ENCODE measurements at regions of chr4 and their contacts with region 1.

Region 1: GRCh38 chr4:7987148-7987989 is 47.7 kb upstream of the AFAP1 start:
- DNase-seq: peak; percentile 64
- H3K4me3 Mint-ChIP-seq: no peak overlapping the region
- H3K27ac Mint-ChIP-seq: no peak overlapping the region
- H3K4me1 Mint-ChIP-seq: peaks cover 6% of the 10 kb centered on the region
- H3K27me3 Mint-ChIP-seq: peaks cover 6% of the 10 kb centered on the region

Region 2: DNA sequence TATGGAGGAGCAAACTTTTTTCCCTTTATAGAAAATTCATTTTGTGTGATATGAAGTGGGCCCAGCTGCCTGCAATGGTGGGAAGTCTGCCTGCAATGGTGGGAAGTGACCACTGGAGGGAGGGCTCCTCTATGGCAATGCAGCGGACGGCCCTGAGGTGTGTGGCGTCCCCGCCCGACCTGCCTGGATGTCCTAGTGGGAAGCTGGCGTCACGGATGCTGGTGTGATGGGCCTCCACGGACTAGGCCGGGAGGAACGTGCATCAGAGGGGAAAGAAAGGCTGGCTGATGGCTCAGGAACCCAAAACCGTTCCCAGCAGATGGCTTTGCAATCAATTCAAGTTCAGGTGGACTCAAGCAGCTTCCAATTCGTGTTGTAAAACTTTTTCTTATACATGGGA is 225.6 kb before region 1 on chr4:
- intact Hi-C with region 1: loop called (anchors 1 kb)
- DNase-seq: peak; percentile 26
- H3K4me3 Mint-ChIP-seq: no peak overlapping the region
- H3K27ac Mint-ChIP-seq: no peak overlapping the region
- H3K4me1 Mint-ChIP-seq: peaks cover 43% of the 10 kb centered on the region
- H3K27me3 Mint-ChIP-seq: no peaks in the 10 kb centered on the region

Region 3: DNA sequence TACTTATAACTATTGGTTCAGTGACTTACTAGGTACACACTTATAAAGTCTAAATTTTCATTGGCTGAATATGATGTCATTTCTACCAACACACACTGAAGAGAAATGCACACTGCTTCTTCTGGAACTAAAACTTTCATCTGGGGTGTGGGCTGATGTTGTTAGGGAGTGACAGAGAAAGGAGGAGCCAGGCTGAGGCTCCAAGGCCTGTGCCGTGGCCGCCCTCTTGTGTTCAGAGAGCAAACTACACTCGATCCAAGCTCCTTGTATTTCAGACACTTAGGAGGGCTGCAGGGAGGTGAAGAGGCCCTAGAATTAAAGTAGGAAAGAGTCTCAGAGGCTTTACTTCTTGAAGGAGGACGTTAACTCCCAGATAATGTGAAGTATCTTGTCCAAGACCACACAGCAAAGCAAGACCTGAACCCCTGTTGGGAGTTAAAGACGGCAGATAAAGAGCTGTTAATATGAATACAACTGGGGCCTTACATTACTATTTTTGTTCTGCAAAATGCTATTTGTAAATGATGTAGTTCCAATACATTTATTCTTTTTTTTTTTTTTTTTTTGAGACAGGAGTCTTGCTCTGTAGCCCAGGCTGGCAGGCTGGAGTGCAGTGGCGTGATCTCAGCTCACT is 185.2 kb before region 1 on chr4:
- intact Hi-C with region 1: loop called (anchors 1 kb)
- DNase-seq: peak; percentile 63
- H3K4me3 Mint-ChIP-seq: no peak overlapping the region
- H3K27ac Mint-ChIP-seq: no peak overlapping the region
- H3K4me1 Mint-ChIP-seq: peaks cover 11% of the 10 kb centered on the region
- H3K27me3 Mint-ChIP-seq: no peaks in the 10 kb centered on the region

Region 4: DNA sequence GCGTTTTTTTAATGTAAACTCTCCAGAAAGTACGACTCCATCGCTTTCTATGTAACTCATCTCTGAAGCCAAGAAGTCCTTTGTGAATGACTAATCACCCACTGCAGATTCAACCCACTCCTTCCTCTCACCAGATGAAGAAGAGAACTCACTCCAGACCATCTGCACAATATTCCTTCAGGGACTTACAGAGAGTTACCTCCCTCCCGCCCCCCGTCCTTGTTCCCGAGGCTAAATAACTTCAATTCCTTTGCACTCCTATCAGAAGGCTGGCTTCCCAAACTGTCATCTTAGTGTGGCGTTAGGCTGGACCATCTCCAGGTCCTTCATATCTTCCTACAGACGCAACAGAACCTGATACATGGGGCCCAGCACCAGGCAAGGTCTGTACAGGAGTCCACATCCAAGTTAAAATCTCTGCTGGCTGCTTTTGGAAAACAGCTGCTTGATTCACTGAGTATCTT is 130.1 kb before region 1 on chr4:
- intact Hi-C with region 1: loop called (anchors 1 kb)
- DNase-seq: no peak
- H3K4me3 Mint-ChIP-seq: peak overlapping the region; percentile 54
- H3K27ac Mint-ChIP-seq: peak overlapping the region; percentile 93
- H3K4me1 Mint-ChIP-seq: peaks cover 60% of the 10 kb centered on the region
- H3K27me3 Mint-ChIP-seq: peaks cover 16% of the 10 kb centered on the region

Region 5: DNA sequence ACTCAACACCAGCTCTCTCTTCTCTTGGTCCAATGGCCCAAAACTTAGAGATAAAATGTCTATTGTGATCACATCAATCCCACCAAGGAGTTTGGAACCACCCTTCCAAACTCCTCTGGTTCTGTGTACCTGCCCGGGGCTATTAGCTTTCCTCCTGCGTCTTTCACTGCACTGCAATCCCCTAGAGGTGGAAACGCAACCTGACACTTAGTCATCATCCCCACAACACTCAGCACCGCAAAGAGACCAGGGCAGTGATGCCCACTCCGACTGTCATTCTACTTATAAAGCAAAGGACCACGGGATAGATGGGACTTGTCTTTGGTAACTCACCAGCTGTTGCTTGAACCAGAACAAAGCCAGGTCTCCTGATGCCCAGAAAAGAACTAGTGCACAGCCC is 69.7 kb before region 1 on chr4:
- intact Hi-C with region 1: no loop called
- DNase-seq: no peak
- H3K4me3 Mint-ChIP-seq: no peak overlapping the region
- H3K27ac Mint-ChIP-seq: peak overlapping the region; percentile 44
- H3K4me1 Mint-ChIP-seq: peaks cover 16% of the 10 kb centered on the region
- H3K27me3 Mint-ChIP-seq: peaks cover under 1% of the 10 kb centered on the region

Region 6: DNA sequence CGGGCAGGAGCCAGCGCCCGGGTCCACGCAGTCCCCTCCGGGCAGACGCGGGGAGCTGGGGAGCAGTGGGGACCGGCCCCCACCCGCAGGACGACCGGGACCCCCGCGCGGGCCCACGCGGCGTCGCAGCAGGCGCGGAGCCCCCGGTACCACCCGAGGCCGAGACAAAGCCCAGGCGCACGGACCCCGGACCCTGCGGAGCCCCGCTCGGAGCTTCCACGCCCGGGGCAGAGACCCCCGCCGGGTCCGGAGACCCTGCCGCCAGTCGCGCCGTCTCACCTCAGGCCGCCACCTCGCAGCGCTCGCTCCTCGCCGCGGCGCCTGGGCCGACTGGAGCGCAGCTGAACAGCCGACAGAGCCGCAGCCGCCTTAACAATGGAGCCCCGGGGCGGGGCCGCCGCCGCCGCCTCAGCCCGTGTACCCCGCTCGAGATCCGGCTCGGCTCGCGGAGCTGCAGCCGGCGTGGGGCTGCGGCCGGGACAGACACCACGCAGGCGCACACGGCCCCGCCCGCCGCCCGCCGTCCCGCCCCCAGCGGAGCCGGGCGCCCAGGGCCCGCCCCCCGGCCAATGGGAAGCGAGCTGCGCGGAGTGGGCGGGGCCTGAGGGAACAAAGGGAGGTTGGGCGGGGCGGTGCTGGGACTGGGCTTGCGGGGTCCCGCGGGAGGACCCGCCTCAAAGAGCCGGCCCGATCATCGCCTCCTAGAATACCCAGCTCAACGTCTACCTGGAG is 47.8 kb before region 1 on chr4 and contains the start of gene AFAP1:
- intact Hi-C with region 1: loop called (anchors 2 kb)
- DNase-seq: peak; percentile 85
- H3K4me3 Mint-ChIP-seq: peak within 1 kb of the TSS; percentile 74
- H3K27ac Mint-ChIP-seq: no peak within 1 kb of the TSS
- H3K4me1 Mint-ChIP-seq: peaks cover 22% of the 10 kb centered on the region
- H3K27me3 Mint-ChIP-seq: peaks cover 25% of the 10 kb centered on the region
- total RNA-seq, gene AFAP1: 48.3 and 48.4 TPM in 2 replicates